Activated CD4-positive, alpha-beta T cell treated with anti-CD3 and anti-CD28 coated beads, Interleukin-2, amount 10 ng/mL, durations not matched to agents 24 days and 14 days (primary cell): ENCODE measurements at regions of chr18 and their contacts with region 1.

Region 1: DNA sequence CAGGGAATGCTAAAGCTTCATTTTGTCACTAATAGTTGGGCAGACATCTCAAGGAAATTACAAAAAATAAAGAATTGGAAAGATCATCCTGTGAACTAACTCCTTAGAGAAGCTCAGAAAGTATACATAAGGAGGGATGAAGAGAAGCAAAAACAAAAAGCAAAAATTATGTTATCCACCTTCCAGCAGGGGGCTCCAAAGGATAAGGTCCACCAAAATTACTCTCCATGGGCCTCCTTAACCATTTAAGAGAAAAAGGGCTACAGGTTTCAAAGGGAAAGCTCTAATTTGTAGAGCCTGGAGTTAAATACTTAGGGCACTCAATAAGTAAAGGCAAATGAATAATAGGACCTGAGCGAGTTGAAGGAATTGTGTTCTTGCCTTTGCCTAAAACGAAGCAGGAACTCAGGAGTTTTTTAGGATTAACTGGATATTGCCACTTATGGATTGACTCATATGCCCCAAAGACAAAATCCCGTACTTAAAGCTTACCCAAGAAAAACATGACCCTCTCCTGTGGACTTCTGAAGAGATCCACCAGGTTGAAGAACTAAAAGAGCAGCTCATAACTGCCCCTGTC is 1167.9 kb downstream of the DSC3 start:
- DNase-seq: no peak
- H3K4me3 Mint-ChIP-seq: no peak overlapping the region
- H3K27ac Mint-ChIP-seq: no peak overlapping the region
- H3K4me1 Mint-ChIP-seq: no peaks in the 10 kb centered on the region
- H3K27me3 Mint-ChIP-seq: no peaks in the 10 kb centered on the region

Region 2: GRCh38 chr18:29594493-29594892 is 280.1 kb before region 1 on chr18:
- intact Hi-C with region 1: no loop called
- DNase-seq: peak; percentile 59
- H3K4me3 Mint-ChIP-seq: no peak overlapping the region
- H3K27ac Mint-ChIP-seq: no peak overlapping the region
- H3K4me1 Mint-ChIP-seq: no peaks in the 10 kb centered on the region
- H3K27me3 Mint-ChIP-seq: no peaks in the 10 kb centered on the region

Region 3: GRCh38 chr18:29979881-29980280 is 105.3 kb after region 1 on chr18:
- intact Hi-C with region 1: no loop called
- DNase-seq: no peak
- H3K4me3 Mint-ChIP-seq: no peak overlapping the region
- H3K27ac Mint-ChIP-seq: no peak overlapping the region
- H3K4me1 Mint-ChIP-seq: no peaks in the 10 kb centered on the region
- H3K27me3 Mint-ChIP-seq: no peaks in the 10 kb centered on the region

Region 4: DNA sequence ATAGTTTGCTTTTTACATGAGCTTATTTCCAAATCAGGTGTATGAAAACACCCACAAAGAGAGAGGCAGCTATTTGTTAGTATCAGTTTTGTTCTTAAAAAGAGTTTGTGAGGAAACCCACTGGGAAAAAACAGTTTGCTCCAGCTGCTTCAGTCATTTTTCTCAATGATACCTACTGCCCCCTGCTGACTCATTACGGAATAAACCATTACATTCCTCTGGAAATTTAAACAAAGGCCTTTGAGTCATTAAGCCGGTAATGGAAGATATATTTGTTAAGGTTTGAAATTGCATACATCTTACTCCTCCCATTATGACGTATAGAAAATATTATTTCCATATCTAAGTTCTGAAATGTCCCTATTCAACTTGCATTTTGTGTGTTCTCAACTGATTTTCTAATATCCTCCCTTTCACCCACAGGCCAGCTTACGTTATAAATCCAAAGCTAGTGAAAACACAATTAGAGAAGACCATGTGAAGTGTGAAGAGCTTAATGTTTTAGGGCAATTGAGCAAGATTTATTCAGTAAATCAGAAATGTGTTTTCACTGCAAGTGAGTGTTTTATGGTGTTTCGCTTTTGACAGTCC is 406.4 kb after region 1 on chr18:
- intact Hi-C with region 1: loop called (anchors 10 kb)
- DNase-seq: no peak
- H3K4me3 Mint-ChIP-seq: no peak overlapping the region
- H3K27ac Mint-ChIP-seq: no peak overlapping the region
- H3K4me1 Mint-ChIP-seq: no peaks in the 10 kb centered on the region
- H3K27me3 Mint-ChIP-seq: no peaks in the 10 kb centered on the region

Region 5: GRCh38 chr18:30971338-30971956 is 1096.8 kb after region 1 on chr18:
- intact Hi-C with region 1: loop called (anchors 10 kb)
- DNase-seq: no peak
- H3K4me3 Mint-ChIP-seq: no peak overlapping the region
- H3K27ac Mint-ChIP-seq: no peak overlapping the region
- H3K4me1 Mint-ChIP-seq: no peaks in the 10 kb centered on the region
- H3K27me3 Mint-ChIP-seq: no peaks in the 10 kb centered on the region